Activated CD8-positive, alpha-beta memory T cell treated with anti-CD3 and anti-CD28 coated beads, Interleukin-2, amount 10 ng/mL, durations not matched to agents 7 days and 5 days (primary cell): ENCODE measurements at regions of chr1 and their contacts with region 1.

Region 1: GRCh38 chr1:117674521-117675397 is 68.9 kb downstream of the TENT5C start:
- DNase-seq: peak; percentile 75
- ATAC-seq: peak; percentile 86
- H3K4me3 Mint-ChIP-seq: no peak overlapping the region
- H3K27ac Mint-ChIP-seq: peak overlapping the region; percentile 70
- H3K4me1 Mint-ChIP-seq: peaks cover 30% of the 10 kb centered on the region
- H3K27me3 Mint-ChIP-seq: no peaks in the 10 kb centered on the region

Region 2: DNA sequence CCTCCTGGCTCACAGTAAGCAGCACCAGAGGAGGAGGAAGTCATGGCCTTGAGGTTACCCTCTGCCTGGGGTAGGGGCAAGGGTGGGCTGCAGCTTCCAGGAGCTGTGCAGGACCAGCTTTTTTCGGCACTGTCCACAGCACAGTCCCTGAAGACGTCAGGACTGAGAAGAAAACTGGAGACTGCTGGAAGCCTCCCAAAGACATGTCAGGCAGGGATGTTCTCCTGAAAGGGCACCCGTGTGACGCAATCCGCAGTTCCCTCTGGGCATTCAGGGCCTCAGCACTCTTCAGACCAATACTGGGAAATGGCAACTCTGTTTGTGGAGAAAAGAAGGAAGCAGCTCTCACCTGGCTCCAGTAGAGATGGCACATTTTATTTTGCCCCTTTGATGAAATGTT is 133.8 kb before region 1 on chr1:
- CTCF ChIA-PET with region 1: interaction called, 113 read pairs
- DNase-seq: no peak
- ATAC-seq: no peak
- H3K4me3 Mint-ChIP-seq: no peak overlapping the region
- H3K27ac Mint-ChIP-seq: no peak overlapping the region
- H3K4me1 Mint-ChIP-seq: peaks cover 24% of the 10 kb centered on the region
- H3K27me3 Mint-ChIP-seq: no peaks in the 10 kb centered on the region

Region 3: DNA sequence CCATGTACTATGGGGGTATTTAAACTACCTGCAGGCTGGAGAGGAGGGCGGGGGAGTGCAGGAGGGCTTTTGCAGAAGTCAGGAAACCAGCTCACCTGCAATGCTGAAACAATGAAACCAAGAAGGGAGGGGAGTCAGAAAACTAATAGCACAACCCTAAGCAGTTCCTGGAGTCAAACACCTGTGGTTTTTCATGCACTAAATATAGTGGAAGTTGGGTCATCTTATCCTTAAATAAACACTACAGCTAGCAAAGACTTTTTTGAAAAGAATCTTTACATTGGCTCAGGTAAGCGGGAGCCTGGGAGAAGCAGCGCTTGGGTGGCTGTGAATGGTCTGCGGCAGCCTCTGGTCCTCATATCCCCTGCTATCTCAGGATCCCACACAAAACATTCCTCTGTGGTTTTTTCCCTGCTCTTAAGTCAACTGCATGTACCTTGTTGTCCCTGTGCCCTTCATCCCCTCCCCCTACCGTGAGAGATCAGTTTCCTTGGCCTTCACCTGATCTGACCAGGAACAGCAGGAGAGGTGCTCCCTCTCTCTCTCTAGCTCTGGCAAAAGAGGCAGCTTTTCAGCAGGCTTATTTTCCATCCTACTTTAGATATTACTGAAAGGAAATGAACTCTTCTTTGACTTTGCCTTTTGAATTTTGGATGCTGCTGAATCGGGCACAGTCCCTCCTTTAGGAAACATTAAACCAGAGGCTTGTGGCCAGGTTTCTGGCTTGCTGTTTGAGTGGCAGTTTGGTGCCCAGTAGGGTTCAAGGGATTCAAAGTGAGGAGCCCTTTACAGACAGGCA is 42.3 kb before region 1 on chr1:
- CTCF ChIA-PET with region 1: interaction called, 52 read pairs
- DNase-seq: no peak
- ATAC-seq: no peak
- H3K4me3 Mint-ChIP-seq: no peak overlapping the region
- H3K27ac Mint-ChIP-seq: peak overlapping the region; percentile 41
- H3K4me1 Mint-ChIP-seq: peaks cover 69% of the 10 kb centered on the region
- H3K27me3 Mint-ChIP-seq: no peaks in the 10 kb centered on the region

Region 4: DNA sequence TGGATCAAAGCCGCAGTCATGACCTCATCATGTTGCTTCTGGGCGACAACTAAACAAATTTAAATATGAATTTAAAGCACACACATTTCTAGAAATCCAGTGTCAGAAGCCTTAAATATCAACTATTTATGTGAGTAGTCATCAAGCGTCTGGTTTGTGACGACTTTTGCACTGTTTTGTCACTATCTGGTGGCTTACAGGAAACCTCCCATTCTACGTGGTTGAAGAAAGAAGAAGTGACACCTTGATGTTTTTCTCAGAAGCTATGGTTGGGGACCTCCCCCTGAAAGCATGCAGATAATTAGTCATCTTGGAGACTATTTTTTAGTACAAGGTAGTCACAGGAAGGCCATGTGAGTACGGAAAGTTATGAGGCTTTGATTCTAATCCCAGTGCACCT is 10.4 kb before region 1 on chr1:
- CTCF ChIA-PET with region 1: interaction called, 56 read pairs
- DNase-seq: peak; percentile 88
- ATAC-seq: peak; percentile 80
- H3K4me3 Mint-ChIP-seq: no peak overlapping the region
- H3K27ac Mint-ChIP-seq: peak overlapping the region; percentile 95
- H3K4me1 Mint-ChIP-seq: peaks cover 82% of the 10 kb centered on the region
- H3K27me3 Mint-ChIP-seq: no peaks in the 10 kb centered on the region